ENCODE measurements at regions of chr12 and their contacts with region 1.

Region 1: DNA sequence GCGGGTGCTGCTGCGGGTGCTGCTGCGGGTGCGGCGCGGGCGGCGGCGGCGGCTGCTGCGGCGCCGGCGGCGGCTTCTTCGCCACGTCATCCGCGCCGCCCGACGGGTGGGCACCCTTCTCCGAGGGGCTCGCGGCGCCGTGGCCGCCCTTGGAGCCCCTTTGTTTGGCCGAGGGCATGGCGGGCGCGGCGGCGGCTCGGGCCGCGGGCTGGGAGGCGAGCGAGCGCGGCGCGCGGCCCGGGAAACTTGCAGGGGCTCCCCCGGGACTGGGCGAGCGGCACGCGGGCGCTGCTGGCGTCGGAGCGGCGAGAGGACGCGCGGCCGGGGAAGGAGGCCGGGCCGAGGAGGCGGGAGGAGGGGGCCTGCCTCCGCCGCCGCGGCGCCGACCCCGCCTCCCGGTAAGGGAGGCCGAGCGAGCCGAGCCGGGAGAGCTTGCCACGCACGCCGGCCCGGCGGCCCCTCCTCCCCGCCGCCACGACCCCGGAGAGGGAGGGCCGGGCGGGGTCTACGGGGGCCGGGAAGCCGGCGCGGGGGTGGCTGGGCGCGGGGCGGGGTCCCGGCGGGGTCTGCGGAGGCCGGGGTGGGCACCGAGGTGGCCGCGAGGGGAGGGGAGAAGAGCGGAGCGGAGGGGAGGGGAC is at the start of gene CKAP4:
- DNase-seq: peak; percentile 37
- H3K4me3 ChIP-seq: peak within 1 kb of the TSS; percentile 54 to 91 (median 87)
- H3K27ac ChIP-seq: peak within 1 kb of the TSS; percentile 45
- H3K4me1 ChIP-seq: peaks cover 17% of the 10 kb centered on the region
- H3K27me3 ChIP-seq: no peaks in the 10 kb centered on the region
- CTCF ChIP-seq: no peak
- total RNA-seq, gene CKAP4: 88.4 to 123 TPM

Region 2: DNA sequence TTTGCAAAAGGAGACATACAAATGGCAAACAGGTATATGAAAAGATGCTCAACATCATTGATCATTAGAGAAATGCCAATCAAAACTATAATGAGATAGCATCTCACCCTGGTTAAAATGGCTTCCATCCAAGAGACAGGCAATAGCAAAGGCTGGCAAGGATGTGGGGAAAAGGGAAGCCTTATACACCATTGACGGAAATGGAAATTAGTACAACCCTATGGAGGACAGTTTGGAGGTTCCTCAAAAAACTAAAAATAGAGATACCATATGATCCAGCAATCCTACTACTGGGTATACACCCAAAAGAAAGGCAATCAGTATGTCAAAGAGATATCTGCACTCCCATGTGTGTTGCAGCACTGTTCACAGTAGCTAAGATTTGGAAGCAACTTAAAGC is 17.3 kb after region 1 on chr12:
- CTCF ChIA-PET with region 1: no interaction called
- dilution Hi-C with region 1: no loop called
- in situ Hi-C with region 1: no loop called
- intact Hi-C with region 1: loop called (anchors 2 kb)
- DNase-seq: no peak
- H3K4me3 ChIP-seq: no peak overlapping the region
- H3K27ac ChIP-seq: no peak overlapping the region
- H3K4me1 ChIP-seq: no peaks in the 10 kb centered on the region
- H3K27me3 ChIP-seq: no peaks in the 10 kb centered on the region
- CTCF ChIP-seq: no peak

Region 3: DNA sequence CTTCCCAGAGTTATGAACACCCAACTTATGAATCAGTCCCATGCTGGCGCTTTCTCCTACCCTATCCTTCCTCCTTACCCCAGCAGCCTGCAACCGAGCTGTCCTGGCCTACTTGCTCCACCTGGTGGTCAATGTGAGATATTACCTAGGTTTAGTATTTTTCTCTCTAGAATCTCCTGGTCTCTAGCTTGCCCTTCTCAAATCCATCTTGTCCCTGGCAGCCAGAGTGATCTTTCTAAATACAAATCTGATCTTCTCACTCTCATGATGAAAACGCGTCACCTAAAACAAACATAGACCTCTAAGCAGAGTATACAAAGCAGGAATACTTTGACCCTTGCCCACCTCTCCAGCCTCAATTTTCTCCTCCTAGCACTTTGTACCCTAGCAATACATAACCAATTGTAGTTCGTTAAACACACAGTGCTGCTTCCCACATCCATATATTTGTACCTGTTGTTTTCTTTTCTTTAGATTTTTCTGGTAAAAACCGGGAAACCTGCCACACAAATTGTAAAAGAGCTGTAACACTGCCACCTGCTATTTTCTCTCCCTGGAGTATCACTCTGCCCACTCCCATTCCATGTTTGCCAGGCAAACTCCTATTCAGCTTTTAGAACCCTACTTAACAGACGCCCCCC is 34.8 kb after region 1 on chr12:
- CTCF ChIA-PET with region 1: no interaction called
- dilution Hi-C with region 1: no loop called
- in situ Hi-C with region 1: loop called in 1 of 2 experiments (anchors 5 kb)
- intact Hi-C with region 1: loop called (anchors 1 kb)
- DNase-seq: peak; percentile 63
- H3K4me3 ChIP-seq: no peak overlapping the region
- H3K27ac ChIP-seq: no peak overlapping the region
- H3K4me1 ChIP-seq: peaks cover 9% of the 10 kb centered on the region
- H3K27me3 ChIP-seq: no peaks in the 10 kb centered on the region
- CTCF ChIP-seq: peak; percentile 79 to 83

Region 4: DNA sequence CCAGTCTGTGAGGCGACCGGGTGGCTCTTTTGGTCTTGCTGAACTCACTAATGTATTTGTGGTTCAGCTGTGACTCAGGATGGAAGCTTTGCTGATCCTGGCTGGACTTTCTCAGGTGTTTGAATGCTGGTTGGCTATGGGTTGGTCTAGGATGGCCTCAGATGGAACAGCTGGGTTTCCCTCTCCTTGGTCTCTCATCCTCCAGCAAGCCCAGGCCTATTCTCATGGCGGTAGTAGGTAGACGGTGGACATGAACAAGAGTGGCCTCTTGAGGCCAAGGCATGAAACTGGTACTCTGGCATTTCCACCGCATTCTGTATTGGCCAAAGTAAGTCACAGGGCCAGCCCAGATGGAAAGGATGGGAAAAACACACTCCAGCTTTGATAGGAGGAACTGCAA is 97.9 kb after region 1 on chr12:
- CTCF ChIA-PET with region 1: no interaction called
- dilution Hi-C with region 1: no loop called
- in situ Hi-C with region 1: no loop called
- intact Hi-C with region 1: loop called (anchors 1 kb)
- DNase-seq: peak; percentile 96
- H3K4me3 ChIP-seq: no peak overlapping the region
- H3K27ac ChIP-seq: peak overlapping the region; percentile 2
- H3K4me1 ChIP-seq: peaks cover 13% of the 10 kb centered on the region
- H3K27me3 ChIP-seq: no peaks in the 10 kb centered on the region
- CTCF ChIP-seq: peak; percentile 59 to 68

Region 5: DNA sequence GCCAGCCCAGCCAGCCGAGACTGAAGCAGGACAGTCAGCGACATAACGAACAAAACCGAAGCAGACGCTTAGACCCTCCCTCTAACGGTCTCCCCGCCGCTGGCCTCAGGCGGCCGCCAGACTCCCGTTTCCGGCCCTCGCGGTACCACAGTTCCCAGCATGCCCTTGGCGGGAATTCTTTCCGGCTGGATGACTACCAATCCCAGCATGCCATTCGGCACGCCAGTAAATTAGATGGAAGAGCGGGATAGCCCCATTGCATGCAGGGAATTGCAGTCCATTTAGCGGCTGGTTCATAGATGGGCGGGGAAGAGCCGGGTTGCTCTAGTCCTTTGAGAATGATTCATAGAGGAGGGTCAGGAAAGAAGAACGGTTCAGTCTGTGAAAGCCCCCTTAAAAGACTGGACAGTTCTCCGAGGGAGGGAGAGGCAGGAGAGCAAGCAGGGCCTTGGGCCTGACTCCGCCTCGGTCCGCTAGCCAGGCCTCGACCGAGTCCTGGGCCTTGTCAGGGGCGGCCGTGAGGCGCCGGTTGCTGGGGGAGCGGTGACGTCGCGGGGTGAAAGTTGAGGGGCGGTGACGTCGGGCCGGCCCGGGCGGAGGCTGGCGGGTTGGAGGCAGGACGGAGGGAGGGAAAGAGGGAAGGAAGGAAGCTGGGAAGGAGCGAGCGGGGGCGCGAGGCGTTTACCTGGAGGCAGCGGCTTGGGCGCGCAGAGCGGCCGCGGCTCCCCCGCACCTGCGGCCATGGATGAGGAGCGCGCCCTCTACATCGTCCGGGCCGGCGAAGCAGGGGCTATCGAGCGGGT is 526.4 kb after region 1 on chr12 and contains the start of gene RIC8B:
- CTCF ChIA-PET with region 1: no interaction called
- dilution Hi-C with region 1: no loop called
- in situ Hi-C with region 1: no loop called
- intact Hi-C with region 1: loop called (anchors 5 kb)
- DNase-seq: peak; percentile 99
- H3K4me3 ChIP-seq: peak within 1 kb of the TSS; percentile 76 to 93 (median 84)
- H3K27ac ChIP-seq: peak within 1 kb of the TSS; percentile 95
- H3K4me1 ChIP-seq: peaks cover 7% of the 10 kb centered on the region
- H3K27me3 ChIP-seq: no peaks in the 10 kb centered on the region
- CTCF ChIP-seq: no peak
- total RNA-seq, gene RIC8B: 9.2 to 9.3 TPM